GM10248 (cell line): ENCODE measurements at regions of chr1 and their contacts with region 1.

Region 1: GRCh38 chr1:156445789-156446263 is 54.7 kb downstream of the MEF2D start:
- DNase-seq: peak; percentile 72
- CTCF ChIP-seq: peak; percentile 98

Region 2: GRCh38 chr1:156356875-156357534 is 88.8 kb before region 1 on chr1:
- CTCF ChIA-PET with region 1: interaction called, 26 read pairs
- POLR2A ChIA-PET with region 1: no interaction called
- DNase-seq: peak; percentile 88
- CTCF ChIP-seq: peak; percentile 79

Region 3: DNA sequence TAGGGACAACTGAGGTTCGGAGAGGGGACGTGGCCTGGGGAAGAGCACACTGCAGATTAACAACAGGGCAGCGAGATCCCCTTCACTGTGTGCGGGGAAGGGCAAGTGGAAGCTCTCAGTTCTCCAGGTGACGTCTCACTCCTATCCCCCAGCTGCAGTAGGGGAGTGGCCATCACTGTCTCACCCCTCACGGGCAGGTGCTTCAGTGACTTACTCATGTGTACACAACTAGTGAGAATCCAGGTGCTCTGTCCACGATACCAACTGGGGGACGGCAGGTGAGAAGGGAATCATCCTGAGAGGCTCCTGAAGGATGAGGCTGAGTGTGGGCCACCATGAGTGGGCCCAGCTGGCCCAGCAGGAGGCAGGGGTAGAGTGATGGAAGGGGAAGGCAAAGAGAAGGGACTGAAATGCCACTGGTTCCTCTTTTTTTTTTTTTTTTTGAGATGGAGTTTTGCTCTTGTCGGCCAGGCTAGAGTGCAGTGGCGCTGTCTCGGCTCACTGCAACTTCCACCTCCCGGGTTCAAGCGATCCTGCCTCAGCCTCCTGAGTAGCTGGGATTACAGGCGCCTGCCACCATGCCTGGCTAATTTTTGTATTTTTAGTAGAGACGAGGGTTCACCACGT is 50.9 kb before region 1 on chr1:
- CTCF ChIA-PET with region 1: interaction called, 46 read pairs
- POLR2A ChIA-PET with region 1: no interaction called
- DNase-seq: no peak
- CTCF ChIP-seq: no peak

Region 4: DNA sequence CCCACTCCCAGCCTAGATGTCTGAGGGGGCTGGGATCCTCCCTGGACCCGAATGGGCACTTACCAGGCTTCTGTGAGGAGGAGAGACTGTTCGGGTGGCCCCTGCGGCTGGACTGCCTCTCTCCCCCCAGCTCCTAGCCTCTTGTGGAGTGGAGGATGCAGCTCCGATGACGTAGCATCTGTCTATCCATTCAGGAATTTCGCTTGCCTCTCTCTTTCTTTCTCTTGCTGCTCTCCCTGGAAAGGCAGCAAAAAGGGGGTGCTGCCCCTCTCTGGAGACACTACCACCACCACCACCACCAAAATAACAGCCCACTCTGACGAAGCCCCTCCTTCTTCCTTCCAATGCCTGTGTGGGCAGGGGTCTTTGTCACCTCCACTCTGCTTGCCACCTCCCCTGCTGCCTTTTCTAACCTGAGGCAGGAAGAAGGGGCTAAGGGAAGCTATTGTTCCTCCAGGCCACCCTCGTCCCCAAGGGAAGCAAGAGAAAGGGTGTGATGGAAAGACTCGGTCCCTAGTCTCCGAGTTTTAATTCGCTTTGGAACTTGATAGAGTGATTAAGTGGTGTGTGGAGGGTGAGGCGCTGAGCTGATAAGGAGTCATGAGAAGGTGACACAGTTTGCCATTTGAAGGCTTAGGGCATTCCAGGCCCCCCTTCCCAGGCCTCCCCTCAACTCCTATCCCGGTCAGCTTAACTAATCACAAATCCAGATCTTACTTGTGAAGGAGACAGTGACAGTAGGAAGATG is 16.3 kb before region 1 on chr1:
- CTCF ChIA-PET with region 1: interaction called, 83 read pairs
- POLR2A ChIA-PET with region 1: no interaction called
- DNase-seq: no peak
- CTCF ChIP-seq: no peak

Region 5: DNA sequence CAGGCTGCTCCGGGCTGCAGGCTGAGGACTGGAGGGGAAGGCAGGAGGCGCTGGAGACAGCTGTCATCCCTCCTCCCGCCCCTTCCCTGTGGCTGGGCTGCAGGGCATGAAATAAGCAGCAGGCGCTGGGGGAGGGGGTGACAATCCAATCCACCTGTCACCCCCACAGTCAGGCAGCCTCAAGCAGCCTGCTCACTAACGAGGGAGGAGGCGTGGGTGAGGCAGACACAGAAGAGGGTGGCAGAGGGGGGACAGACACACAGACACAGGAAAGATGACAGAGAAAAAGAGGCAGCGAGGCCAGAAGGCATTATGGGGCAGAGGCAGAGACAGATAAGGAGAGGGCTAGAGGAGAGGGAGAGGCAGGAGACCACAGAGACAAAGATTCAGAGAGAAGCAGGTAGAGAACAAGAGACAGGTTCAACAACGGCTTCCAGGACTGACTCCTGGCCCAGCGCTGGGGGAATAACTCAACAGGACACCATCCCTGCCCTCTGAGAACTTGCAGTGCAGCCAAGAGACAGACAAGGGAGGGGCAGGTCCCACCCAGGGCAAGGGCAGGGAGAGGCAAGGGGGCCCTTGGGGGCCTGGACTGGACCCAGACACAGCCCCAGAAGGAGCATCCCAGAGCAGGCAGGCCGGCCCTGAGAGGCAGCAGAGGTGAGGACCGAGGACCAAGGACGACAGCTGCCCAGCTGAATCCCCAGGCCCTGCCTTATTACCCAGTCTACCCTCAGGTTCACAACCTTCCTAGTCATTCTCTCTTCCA is 43.5 kb after region 1 on chr1:
- CTCF ChIA-PET with region 1: interaction called, 12 read pairs
- POLR2A ChIA-PET with region 1: no interaction called
- DNase-seq: no peak
- CTCF ChIP-seq: no peak